ENCODE measurements at regions of chr18 and their contacts with region 1.

Region 1: GRCh38 chr18:27750014-27750413 is 426.9 kb downstream of the CDH2 start:
- DNase-seq: peak; percentile 17 to 64 (median 41)
- H3K4me3 ChIP-seq: no peak overlapping the region
- H3K27ac ChIP-seq: no peak overlapping the region
- H3K4me1 ChIP-seq: no peaks in the 10 kb centered on the region
- H3K27me3 ChIP-seq: no peaks in the 10 kb centered on the region
- CTCF ChIP-seq: peak in 5 of 6 experiments; percentile 35 to 54 (median 47)
- POLR2A ChIP-seq: no peak

Region 2: DNA sequence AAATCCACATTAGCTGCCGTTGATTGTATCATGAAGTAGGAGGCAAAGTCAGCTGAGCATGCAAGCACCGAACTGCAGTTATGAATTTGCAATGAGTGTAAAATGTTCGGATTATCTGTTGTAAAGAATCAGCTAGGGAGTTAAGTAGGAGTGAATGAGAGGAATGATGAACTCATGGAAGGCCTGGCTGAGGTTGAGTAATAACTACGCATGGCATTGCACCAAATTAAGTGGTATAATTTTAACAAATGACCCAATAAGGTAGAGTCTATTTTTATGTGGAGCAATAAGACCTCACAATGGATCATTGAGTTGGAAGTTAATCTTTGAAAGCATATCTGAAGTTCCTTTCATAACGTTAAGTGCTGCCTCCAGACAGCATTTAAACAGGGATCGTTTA is 276.7 kb before region 1 on chr18:
- intact Hi-C with region 1: no loop called
- DNase-seq: no peak
- H3K4me3 ChIP-seq: no peak overlapping the region
- H3K27ac ChIP-seq: no peak overlapping the region
- H3K4me1 ChIP-seq: no peaks in the 10 kb centered on the region
- H3K27me3 ChIP-seq: no peaks in the 10 kb centered on the region
- CTCF ChIP-seq: no peak
- POLR2A ChIP-seq: no peak

Region 3: DNA sequence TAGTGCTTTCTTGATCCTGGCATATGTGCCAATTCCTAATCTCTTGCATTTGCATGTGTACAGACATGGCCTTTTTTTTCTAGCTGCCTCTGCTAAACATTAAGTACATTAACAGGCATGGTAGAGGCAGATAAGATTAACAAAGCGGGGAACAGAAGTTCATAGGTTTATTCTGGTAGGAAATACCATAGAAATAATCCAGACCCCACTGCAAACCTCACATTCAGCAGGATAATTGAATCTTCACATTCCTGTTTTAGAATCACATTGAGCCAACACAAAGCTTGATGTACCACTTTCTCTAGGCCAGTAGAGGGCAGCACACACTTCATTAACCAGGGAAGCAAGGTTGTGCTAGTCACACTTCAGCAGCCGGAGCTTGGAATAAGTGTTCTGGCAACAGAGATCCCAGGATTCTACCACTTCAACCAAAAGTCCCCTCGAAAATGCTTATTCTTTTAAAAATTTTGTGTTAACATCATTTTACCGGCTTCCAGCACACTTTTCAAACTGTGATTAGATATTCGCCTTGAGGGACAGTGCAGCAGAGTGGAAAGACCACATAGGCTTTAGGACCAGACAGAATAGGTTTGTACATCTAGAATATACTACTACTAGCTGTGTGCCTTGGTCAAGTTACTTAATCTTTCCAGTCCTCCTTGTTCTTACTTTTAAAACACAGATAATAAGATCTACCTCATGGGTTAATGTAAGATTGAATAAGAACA is 144.7 kb before region 1 on chr18:
- intact Hi-C with region 1: loop called in 1 of 2 experiments (anchors 10 kb)
- DNase-seq: peak; percentile 49 to 82 (median 64)
- H3K4me3 ChIP-seq: no peak overlapping the region
- H3K27ac ChIP-seq: no peak overlapping the region
- H3K4me1 ChIP-seq: no peaks in the 10 kb centered on the region
- H3K27me3 ChIP-seq: no peaks in the 10 kb centered on the region
- CTCF ChIP-seq: peak; percentile 56 to 82 (median 68)
- POLR2A ChIP-seq: no peak

Region 4: GRCh38 chr18:27685807-27686412 is 64.1 kb before region 1 on chr18:
- intact Hi-C with region 1: loop called in 1 of 2 experiments (anchors 10 kb)
- DNase-seq: peak in 6 of 7 donors; percentile 21 to 60 (median 43)
- H3K4me3 ChIP-seq: no peak overlapping the region
- H3K27ac ChIP-seq: no peak overlapping the region
- H3K4me1 ChIP-seq: no peaks in the 10 kb centered on the region
- H3K27me3 ChIP-seq: no peaks in the 10 kb centered on the region
- CTCF ChIP-seq: peak; percentile 42 to 65 (median 54)
- POLR2A ChIP-seq: no peak

Region 5: GRCh38 chr18:27704736-27705361 is 45.2 kb before region 1 on chr18:
- intact Hi-C with region 1: loop called in 1 of 2 experiments (anchors 10 kb)
- DNase-seq: no peak
- H3K4me3 ChIP-seq: no peak overlapping the region
- H3K27ac ChIP-seq: no peak overlapping the region
- H3K4me1 ChIP-seq: no peaks in the 10 kb centered on the region
- H3K27me3 ChIP-seq: no peaks in the 10 kb centered on the region
- CTCF ChIP-seq: no peak
- POLR2A ChIP-seq: no peak

Measured in adrenal gland (tissue), 19 donors.